Activated B cell treated with CpG ODN at 0.5 μM for 24 hours (primary cell): ENCODE measurements at regions of chr20 and their contacts with region 1.

Region 1: GRCh38 chr20:50189681-50190582 is 698 bp upstream of the CEBPB start:
- DNase-seq: no peak
- ATAC-seq: peak; percentile 69
- H3K4me3 Mint-ChIP-seq: peak overlapping the region; percentile 58
- H3K27ac Mint-ChIP-seq: no peak overlapping the region
- H3K4me1 Mint-ChIP-seq: peaks cover 27% of the 10 kb centered on the region
- H3K27me3 Mint-ChIP-seq: peaks cover 8% of the 10 kb centered on the region
- CTCF ChIP-seq: no peak

Region 2: DNA sequence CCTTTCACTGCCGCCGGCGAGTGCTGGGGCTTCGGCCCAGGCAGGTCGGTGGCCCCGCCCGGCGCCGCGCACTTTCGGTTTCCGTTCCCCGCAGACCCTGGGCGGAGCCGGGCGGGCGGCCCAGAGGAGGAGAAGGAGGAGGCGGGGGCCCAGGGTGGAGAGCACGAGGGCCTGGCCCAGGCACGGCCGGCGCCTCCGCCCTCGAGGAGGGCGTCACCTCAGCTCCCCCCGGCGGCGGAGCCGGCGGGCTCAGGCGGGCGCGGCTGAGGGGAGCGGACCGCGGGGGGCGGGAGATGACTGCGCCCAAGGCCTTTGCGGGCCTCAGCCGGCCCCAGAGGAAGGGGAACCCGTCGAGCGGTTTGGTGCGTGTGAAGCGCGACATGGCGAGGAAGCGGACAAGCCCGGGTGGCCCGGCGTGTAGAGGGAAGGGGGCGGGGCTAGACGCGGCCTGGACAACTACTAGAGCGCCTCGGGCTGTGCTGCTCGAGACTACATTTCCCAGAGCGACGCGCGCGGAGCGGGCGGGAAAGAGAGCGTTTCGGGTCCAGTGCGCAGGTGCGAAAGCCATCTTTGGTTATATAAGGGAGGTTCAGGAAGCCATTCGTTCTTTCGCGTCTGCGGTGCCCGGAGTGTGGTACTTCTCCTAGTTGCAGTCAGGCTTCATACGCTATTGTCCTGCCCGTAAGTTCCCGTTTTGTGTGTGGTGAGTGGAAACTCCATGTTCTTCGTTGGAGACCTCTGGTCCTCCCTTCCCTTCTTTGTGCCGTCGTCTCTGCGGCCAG is 911.7 kb before region 1 on chr20 and contains the start of gene ZNFX1:
- CTCF ChIA-PET with region 1: no interaction called
- POLR2A ChIA-PET with region 1: no interaction called
- intact Hi-C with region 1: loop called (anchors 5 kb)
- DNase-seq: peak; percentile 96
- ATAC-seq: peak; percentile 81
- H3K4me3 Mint-ChIP-seq: peak within 1 kb of the TSS; percentile 98
- H3K27ac Mint-ChIP-seq: peak within 1 kb of the TSS; percentile 98
- H3K4me1 Mint-ChIP-seq: peaks cover 66% of the 10 kb centered on the region
- H3K27me3 Mint-ChIP-seq: no peaks in the 10 kb centered on the region
- CTCF ChIP-seq: no peak
- total RNA-seq, gene ZNFX1: 49.6 and 51.9 TPM in 2 replicates

Region 3: GRCh38 chr20:50393990-50394561 is 204.1 kb after region 1 on chr20:
- CTCF ChIA-PET with region 1: no interaction called
- POLR2A ChIA-PET with region 1: interaction called, 11 read pairs
- intact Hi-C with region 1: no loop called
- DNase-seq: no peak
- ATAC-seq: no peak
- H3K4me3 Mint-ChIP-seq: no peak overlapping the region
- H3K27ac Mint-ChIP-seq: no peak overlapping the region
- H3K4me1 Mint-ChIP-seq: peaks cover 5% of the 10 kb centered on the region
- H3K27me3 Mint-ChIP-seq: peaks cover 5% of the 10 kb centered on the region
- CTCF ChIP-seq: no peak

Region 4: DNA sequence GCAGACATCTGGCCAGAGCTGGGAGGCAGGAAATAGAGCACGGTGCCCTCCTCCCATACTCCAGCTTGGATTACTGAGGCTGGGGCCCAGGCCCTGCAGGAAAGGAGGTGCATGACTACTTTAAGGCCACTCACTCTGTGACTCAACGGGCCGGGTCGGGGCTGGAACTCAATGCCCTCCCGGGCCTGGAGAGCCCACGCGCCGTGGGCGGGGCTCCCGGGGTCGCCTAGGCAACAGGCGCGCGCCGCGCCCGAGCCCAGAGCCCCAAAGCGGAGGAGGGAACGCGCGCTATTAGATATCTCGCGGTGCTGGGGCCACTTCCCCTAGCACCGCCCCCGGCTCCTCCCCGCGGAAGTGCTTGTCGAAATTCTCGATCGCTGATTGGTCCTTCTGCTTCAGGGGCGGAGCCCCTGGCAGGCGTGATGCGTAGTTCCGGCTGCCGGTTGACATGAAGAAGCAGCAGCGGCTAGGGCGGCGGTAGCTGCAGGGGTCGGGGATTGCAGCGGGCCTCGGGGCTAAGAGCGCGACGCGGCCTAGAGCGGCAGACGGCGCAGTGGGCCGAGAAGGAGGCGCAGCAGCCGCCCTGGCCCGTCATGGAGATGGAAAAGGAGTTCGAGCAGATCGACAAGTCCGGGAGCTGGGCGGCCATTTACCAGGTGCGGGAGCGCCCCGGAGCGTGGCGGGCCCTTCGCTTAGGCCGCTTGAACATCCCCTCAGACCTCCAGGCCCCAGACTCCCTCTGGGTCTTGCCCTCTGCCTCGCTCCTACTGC is 320.2 kb after region 1 on chr20 and contains the start of gene PTPN1:
- CTCF ChIA-PET with region 1: no interaction called
- POLR2A ChIA-PET with region 1: no interaction called
- intact Hi-C with region 1: loop called (anchors 2 kb)
- DNase-seq: peak; percentile 97
- ATAC-seq: peak; percentile 90
- H3K4me3 Mint-ChIP-seq: peak within 1 kb of the TSS; percentile 90
- H3K27ac Mint-ChIP-seq: peak within 1 kb of the TSS; percentile 96
- H3K4me1 Mint-ChIP-seq: peaks cover 48% of the 10 kb centered on the region
- H3K27me3 Mint-ChIP-seq: no peaks in the 10 kb centered on the region
- CTCF ChIP-seq: no peak
- total RNA-seq, gene PTPN1: 212 and 227 TPM in 2 replicates

Region 5: GRCh38 chr20:50582591-50583234 is 392.8 kb after region 1 on chr20:
- CTCF ChIA-PET with region 1: interaction called, 8 read pairs
- POLR2A ChIA-PET with region 1: interaction called, 6 read pairs
- intact Hi-C with region 1: loop called (anchors 1 kb)
- DNase-seq: no peak
- ATAC-seq: peak; percentile 87
- H3K4me3 Mint-ChIP-seq: peak overlapping the region; percentile 56
- H3K27ac Mint-ChIP-seq: peak overlapping the region; percentile 84
- H3K4me1 Mint-ChIP-seq: peaks cover 46% of the 10 kb centered on the region
- H3K27me3 Mint-ChIP-seq: no peaks in the 10 kb centered on the region
- CTCF ChIP-seq: no peak

Region 6: DNA sequence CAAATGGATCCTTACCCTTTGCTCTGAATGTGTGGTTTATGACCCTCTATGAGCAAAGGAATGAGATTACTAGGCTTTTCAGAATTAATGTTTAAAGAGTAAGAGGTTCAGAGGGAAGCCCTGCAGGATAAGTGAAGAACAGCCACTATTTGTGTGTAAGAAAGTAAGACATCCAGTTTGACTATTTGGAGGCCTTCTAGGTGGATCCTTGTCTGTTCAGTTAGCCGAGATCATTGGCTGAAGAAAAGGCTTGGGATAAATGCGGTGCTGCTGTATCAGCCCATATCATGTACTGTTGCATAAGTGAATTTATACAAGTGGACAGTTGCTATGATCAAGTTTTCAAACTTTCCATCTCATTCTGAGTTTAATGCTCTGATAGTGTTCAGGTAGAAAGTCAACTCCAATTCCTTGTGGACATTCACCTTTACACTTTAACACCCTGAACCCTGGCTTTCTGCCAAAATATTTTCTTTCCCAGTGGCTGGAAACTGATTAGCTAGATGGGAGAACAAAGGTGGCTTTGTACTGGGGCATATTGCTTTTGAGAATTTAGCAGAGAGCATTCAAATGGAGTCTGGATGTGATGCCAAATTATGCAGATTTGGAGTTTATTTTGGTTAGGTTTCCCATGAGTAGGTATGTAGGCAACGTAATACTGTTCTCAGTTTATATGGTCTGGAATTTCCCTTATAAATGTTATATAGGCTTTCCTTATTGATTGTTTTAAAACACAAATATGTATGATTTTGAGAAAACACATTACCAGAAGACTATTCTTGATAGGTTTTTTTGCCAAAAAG is 556.4 kb after region 1 on chr20:
- CTCF ChIA-PET with region 1: interaction called, 21 read pairs
- POLR2A ChIA-PET with region 1: interaction called, 4 read pairs
- intact Hi-C with region 1: loop called (anchors 1 kb)
- DNase-seq: no peak
- ATAC-seq: no peak
- H3K4me3 Mint-ChIP-seq: no peak overlapping the region
- H3K27ac Mint-ChIP-seq: no peak overlapping the region
- H3K4me1 Mint-ChIP-seq: peaks cover 8% of the 10 kb centered on the region
- H3K27me3 Mint-ChIP-seq: no peaks in the 10 kb centered on the region
- CTCF ChIP-seq: no peak